Activated B cell treated with CpG ODN at 0.5 μM for 24 hours (primary cell): ENCODE measurements at regions of chr1 and their contacts with region 1.

Region 1: DNA sequence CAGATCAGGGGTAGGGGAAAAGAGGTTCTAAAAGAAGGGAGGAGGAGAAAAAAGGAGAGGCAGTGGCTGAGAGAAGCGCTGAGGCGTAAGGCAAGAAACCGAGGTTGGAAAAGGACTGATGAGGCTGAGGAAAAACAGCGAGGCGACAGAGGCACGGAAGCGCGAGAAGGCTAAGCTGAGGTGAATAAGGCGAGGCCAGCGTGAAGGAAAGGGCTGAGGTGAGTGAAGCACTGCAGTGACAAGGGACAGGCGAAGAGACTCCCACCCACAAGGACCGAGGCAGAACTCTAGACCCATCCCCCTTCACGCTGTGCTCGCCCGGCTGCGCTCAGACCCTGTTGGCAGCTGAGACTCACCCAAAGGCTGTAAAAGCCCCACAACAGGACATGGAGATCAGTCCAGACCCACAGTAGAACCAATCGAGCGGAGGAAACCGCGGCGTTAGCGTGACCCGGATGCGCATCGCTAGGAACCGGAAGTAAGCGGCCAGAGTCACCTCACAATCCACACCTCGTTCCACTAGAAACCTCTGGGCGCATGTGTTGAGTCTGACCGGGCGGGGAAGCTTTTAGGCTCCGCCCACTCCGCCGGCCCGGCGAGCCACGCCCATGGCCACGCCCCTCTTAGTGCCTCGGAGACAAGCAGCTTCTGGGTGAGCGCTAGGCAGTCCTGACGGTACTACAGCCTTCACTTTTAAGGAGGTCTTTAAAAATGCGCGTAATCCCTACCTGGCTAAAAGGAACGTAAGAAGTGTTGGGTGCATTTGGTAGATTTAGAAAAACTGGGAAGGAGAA is at the start of gene EYA3:
- DNase-seq: peak; percentile 100
- ATAC-seq: peak; percentile 93
- H3K4me3 Mint-ChIP-seq: peak within 1 kb of the TSS; percentile 98
- H3K27ac Mint-ChIP-seq: peak within 1 kb of the TSS; percentile 98
- H3K4me1 Mint-ChIP-seq: peaks cover 39% of the 10 kb centered on the region
- H3K27me3 Mint-ChIP-seq: no peaks in the 10 kb centered on the region
- CTCF ChIP-seq: no peak
- total RNA-seq, gene EYA3: 26.7 and 31.0 TPM in 2 replicates

Region 2: GRCh38 chr1:27858072-27858958 is 230.1 kb before region 1 on chr1:
- CTCF ChIA-PET with region 1: interaction called, 7 read pairs
- POLR2A ChIA-PET with region 1: interaction called, 3 read pairs
- intact Hi-C with region 1: loop called (anchors 2 kb)
- DNase-seq: peak; percentile 80
- ATAC-seq: peak; percentile 88
- H3K4me3 Mint-ChIP-seq: no peak overlapping the region
- H3K27ac Mint-ChIP-seq: peak overlapping the region; percentile 68
- H3K4me1 Mint-ChIP-seq: peaks cover 28% of the 10 kb centered on the region
- H3K27me3 Mint-ChIP-seq: no peaks in the 10 kb centered on the region
- CTCF ChIP-seq: peak; percentile 95

Region 3: DNA sequence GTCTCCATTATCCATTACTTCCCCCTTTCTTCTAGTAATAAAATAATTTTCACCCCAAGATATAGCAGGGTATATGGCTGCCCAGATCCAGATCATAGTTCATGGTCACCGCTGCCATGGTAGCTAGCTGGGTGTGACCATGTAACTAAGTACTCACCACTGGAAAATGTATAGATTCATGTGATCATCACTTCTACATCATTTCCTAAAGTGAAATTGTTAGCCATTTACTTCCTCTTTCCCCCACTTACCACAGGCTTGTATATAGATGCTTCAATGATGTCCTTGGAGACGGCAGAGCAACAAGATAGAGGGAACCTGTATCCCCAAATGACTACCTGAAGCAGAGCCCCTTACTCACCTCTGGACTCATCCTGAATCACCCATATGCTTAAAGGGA is 22.8 kb after region 1 on chr1:
- CTCF ChIA-PET with region 1: interaction called, 9 read pairs
- POLR2A ChIA-PET with region 1: interaction called, 5 read pairs
- intact Hi-C with region 1: loop called (anchors 2 kb)
- DNase-seq: no peak
- ATAC-seq: peak; percentile 80
- H3K4me3 Mint-ChIP-seq: peak overlapping the region; percentile 9
- H3K27ac Mint-ChIP-seq: peak overlapping the region; percentile 57
- H3K4me1 Mint-ChIP-seq: peaks cover 27% of the 10 kb centered on the region
- H3K27me3 Mint-ChIP-seq: no peaks in the 10 kb centered on the region
- CTCF ChIP-seq: no peak

Region 4: DNA sequence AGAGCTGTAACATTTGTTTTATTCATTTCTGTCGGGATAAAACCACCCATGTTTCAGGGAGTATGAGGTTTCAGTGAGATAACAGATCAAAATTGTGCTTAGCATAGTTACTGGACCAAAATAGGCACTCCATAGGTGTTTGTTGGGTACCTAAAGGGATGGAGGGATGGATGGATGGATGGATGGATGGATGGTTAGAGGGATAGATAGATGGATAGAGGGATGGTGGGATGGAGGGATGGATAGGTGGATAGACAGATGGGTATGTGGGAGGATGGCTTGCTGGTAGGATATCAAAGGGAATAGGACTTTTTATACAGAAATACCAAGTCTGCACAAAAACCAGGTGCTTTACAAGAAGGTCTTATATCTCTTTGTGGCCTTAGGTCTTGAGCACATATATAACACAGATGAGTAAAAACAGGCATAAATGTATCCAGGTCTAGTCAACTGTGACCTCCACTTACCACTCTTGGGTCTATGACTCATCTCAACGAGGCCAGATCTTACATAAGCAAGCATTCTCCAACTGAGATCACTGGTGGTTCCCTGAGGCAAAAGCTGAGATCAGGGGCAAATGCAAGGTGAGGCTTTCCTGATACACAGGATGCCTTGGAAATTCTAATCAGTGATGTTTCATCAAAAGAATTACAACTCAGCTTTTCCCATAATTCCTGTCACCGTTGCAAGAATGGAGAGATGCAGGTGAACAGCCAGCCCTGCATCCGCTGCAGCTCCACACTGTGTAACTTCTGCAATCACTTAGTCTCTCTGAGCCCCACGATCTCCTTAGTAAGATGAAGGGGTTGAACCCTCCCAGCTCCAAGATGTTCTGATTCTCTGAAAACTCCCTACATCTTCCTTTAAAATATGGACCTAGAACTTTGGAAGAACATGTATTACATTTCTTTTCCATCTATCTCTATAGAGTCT is 56.1 kb after region 1 on chr1:
- CTCF ChIA-PET with region 1: interaction called, 13 read pairs
- POLR2A ChIA-PET with region 1: interaction called, 7 read pairs
- intact Hi-C with region 1: loop called (anchors 2 kb)
- DNase-seq: no peak
- ATAC-seq: peak; percentile 85
- H3K4me3 Mint-ChIP-seq: peak overlapping the region; percentile 29
- H3K27ac Mint-ChIP-seq: peak overlapping the region; percentile 78
- H3K4me1 Mint-ChIP-seq: peaks cover 49% of the 10 kb centered on the region
- H3K27me3 Mint-ChIP-seq: no peaks in the 10 kb centered on the region
- CTCF ChIP-seq: no peak

Region 5: GRCh38 chr1:28172713-28173150 is 84.4 kb after region 1 on chr1:
- CTCF ChIA-PET with region 1: interaction called, 9 read pairs
- POLR2A ChIA-PET with region 1: interaction called, 19 read pairs
- intact Hi-C with region 1: loop called (anchors 1 kb)
- DNase-seq: peak; percentile 47
- ATAC-seq: peak; percentile 66
- H3K4me3 Mint-ChIP-seq: peak overlapping the region; percentile 73
- H3K27ac Mint-ChIP-seq: peak overlapping the region; percentile 87
- H3K4me1 Mint-ChIP-seq: peaks cover 90% of the 10 kb centered on the region
- H3K27me3 Mint-ChIP-seq: no peaks in the 10 kb centered on the region
- CTCF ChIP-seq: no peak

Region 6: GRCh38 chr1:28208818-28209441 is 120.6 kb after region 1 on chr1:
- CTCF ChIA-PET with region 1: interaction called, 236 read pairs
- POLR2A ChIA-PET with region 1: interaction called, 22 read pairs
- intact Hi-C with region 1: loop called (anchors 1 kb)
- DNase-seq: no peak
- ATAC-seq: peak; percentile 86
- H3K4me3 Mint-ChIP-seq: no peak overlapping the region
- H3K27ac Mint-ChIP-seq: no peak overlapping the region
- H3K4me1 Mint-ChIP-seq: peaks cover 2% of the 10 kb centered on the region
- H3K27me3 Mint-ChIP-seq: no peaks in the 10 kb centered on the region
- CTCF ChIP-seq: no peak